ENCODE measurements at regions of chr2 and their contacts with region 1.

Region 1: DNA sequence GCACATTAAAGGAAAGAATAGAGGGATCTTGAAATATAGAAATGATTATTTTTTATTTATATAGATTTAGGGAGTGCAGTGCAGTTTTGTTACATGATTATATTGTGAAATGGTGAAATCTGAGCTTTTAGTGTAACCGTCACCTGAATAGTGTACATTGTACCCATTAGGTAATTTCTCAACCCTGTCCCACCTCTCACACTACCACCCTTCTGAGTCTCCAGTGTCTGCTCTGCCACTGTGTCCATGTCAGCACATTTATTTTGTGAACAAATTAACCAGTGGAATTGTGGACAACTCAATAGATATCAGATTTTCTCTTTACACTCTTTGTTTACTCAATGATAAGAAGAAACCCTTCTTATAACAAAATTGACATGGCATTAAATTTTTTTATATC is 24.2 kb downstream of the APLF start:
- DNase-seq: no peak
- H3K4me3 ChIP-seq: no peak overlapping the region
- H3K27ac ChIP-seq: no peak overlapping the region
- H3K4me1 ChIP-seq: peaks cover 0 to 8% (median 1%) of the 10 kb centered on the region in 6 donors
- H3K27me3 ChIP-seq: no peaks in the 10 kb centered on the region
- CTCF ChIP-seq: no peak
- POLR2A ChIP-seq: no peak

Region 2: DNA sequence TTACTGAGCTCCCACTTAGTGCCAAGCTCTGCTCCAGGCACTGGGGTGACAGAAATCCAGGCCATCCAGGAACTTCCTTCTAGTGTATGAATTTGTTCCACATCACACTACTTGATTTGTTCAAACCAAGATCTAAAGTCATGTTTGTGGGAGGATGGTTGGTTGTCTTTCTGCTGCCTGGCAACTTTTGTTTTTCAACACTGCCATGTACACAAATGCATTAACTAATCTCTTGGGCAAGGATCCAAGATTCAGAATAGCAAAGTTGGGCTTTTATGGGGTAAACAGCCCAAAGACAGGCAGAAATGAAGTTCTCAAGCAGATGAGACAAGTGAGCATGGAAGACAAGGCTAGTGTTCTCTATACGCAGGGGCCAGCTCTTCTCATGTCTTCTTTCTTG is 98.4 kb after region 1 on chr2:
- intact Hi-C with region 1: loop called (anchors 10 kb)
- DNase-seq: no peak
- H3K4me3 ChIP-seq: no peak overlapping the region
- H3K27ac ChIP-seq: no peak overlapping the region
- H3K4me1 ChIP-seq: peaks cover 0 to 11% (median 7%) of the 10 kb centered on the region in 6 donors
- H3K27me3 ChIP-seq: no peaks in the 10 kb centered on the region
- CTCF ChIP-seq: no peak
- POLR2A ChIP-seq: no peak